Activated CD8-positive, alpha-beta T cell treated with anti-CD3 and anti-CD28 coated beads for 36 hours (primary cell): ENCODE measurements at regions of chr11 and their contacts with region 1.

Region 1: DNA sequence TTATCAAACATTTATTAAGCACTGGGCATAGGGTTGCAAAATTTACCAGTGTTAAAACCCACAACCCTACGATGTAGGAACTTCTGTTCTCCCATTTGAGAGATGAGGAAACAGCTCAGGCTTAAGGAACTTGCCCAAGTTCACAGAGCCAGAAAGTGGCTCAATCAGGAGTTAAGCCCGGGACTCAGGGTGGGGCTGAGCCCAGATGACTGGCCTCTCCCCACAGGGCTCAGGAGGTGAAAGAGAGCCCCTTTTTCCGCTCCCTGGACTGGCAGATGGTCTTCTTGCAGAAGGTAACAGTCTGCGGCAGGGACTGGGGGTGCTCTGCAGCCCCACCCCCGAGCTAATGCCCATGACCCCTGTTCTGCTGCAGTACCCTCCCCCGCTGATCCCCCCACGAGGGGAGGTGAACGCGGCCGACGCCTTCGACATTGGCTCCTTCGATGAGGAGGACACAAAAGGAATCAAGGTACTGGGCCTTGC is 5.6 kb upstream of the ANKRD13D start:
- DNase-seq: no peak
- ATAC-seq: no peak
- H3K4me3 Mint-ChIP-seq: no peak overlapping the region
- H3K27ac Mint-ChIP-seq: peak overlapping the region; percentile 61
- H3K4me1 Mint-ChIP-seq: peaks cover 37% of the 10 kb centered on the region
- H3K27me3 Mint-ChIP-seq: no peaks in the 10 kb centered on the region
- CTCF ChIP-seq: no peak

Region 2: GRCh38 chr11:66915046-66915832 is 368.3 kb before region 1 on chr11:
- CTCF ChIA-PET with region 1: no interaction called
- POLR2A ChIA-PET with region 1: no interaction called
- intact Hi-C with region 1: no loop called
- DNase-seq: no peak
- ATAC-seq: no peak
- H3K4me3 Mint-ChIP-seq: no peak overlapping the region
- H3K27ac Mint-ChIP-seq: no peak overlapping the region
- H3K4me1 Mint-ChIP-seq: no peaks in the 10 kb centered on the region
- H3K27me3 Mint-ChIP-seq: no peaks in the 10 kb centered on the region
- CTCF ChIP-seq: no peak

Region 3: DNA sequence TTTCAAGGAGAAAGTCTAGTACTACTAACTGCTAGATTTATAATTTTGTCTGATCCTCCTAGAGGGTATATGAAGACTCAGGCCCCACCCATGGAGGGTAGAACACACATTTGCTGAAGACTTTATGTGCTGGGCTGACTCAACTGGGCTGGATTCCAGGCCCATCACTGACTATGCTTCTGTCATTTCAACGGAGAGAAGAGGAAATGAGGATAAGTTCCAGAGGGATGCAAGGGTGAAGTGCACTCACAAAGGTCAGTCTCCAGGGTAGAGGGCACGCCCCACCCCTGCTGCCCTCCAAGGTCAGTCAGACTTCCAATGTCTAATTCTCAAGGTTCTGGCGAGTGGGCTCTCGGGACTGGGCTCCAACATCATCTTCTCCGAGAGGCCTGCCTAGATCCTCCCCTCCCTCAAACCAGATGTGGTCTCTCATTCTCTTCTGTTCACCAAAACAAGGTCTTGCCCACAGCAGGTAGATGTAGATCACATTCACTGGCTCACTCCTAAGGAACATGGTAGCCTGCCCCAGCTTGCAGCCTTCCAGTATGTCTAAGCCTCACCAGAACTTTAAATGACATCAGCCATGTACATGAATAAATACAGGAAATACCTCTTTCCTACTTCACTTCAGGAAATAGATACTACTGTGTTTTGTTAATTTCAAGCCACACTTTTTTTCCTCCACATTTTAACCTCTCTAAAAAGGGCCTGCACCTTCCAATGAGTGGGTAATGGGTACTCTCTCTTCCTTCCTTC is 315.7 kb before region 1 on chr11:
- CTCF ChIA-PET with region 1: no interaction called
- POLR2A ChIA-PET with region 1: no interaction called
- intact Hi-C with region 1: no loop called
- DNase-seq: no peak
- ATAC-seq: no peak
- H3K4me3 Mint-ChIP-seq: no peak overlapping the region
- H3K27ac Mint-ChIP-seq: no peak overlapping the region
- H3K4me1 Mint-ChIP-seq: peaks cover 8% of the 10 kb centered on the region
- H3K27me3 Mint-ChIP-seq: peaks cover 4% of the 10 kb centered on the region
- CTCF ChIP-seq: no peak

Region 4: DNA sequence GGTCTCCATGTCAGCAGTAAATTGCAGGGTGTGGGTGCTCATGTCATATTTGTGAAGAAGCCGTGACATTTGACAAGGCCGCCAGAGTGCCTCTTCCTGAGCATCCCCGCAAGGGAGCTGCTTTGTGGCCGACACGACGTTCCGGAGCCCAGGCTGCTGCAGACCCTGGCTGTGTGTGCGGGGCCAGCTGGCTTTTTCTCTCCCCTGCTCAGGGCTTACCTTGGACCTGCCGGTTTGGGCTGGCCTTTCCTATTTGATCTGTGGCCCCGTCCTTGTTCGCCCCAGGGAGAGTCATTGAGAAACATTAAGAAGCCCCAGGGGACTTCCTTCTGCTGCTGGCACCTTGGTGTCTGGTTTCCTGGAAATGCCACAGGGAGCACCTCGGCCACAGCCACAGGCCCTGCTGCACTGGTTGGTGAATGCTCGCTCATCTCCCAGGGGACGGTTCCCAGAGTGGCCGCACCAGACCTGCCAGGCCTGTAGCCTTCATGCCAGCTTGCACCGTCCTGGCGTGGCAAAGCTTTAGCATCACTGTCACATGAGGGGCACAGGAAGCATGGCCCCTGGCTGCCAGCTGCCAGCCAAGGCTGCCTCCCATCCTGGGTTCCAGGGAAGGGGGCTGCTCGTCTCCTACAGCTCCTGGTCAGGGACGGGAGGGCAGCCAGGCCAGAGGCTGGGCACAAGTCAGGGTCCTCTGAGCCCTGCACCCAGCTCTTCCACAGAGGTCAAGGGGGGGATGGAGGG is 11.8 kb before region 1 on chr11:
- CTCF ChIA-PET with region 1: interaction called, 55 read pairs
- POLR2A ChIA-PET with region 1: interaction called, 308 read pairs
- intact Hi-C with region 1: loop called (anchors 2 kb)
- DNase-seq: peak; percentile 90
- ATAC-seq: peak; percentile 25
- H3K4me3 Mint-ChIP-seq: peak overlapping the region; percentile 90
- H3K27ac Mint-ChIP-seq: peak overlapping the region; percentile 97
- H3K4me1 Mint-ChIP-seq: peaks cover 63% of the 10 kb centered on the region
- H3K27me3 Mint-ChIP-seq: no peaks in the 10 kb centered on the region
- CTCF ChIP-seq: no peak